Activated naive CD8-positive, alpha-beta T cell treated with anti-CD3 and anti-CD28 coated beads, Interleukin-2, amount 10 ng/mL, durations not matched to agents 7 days and 5 days (primary cell): ENCODE measurements at regions of chr4 and their contacts with region 1.

Region 1: DNA sequence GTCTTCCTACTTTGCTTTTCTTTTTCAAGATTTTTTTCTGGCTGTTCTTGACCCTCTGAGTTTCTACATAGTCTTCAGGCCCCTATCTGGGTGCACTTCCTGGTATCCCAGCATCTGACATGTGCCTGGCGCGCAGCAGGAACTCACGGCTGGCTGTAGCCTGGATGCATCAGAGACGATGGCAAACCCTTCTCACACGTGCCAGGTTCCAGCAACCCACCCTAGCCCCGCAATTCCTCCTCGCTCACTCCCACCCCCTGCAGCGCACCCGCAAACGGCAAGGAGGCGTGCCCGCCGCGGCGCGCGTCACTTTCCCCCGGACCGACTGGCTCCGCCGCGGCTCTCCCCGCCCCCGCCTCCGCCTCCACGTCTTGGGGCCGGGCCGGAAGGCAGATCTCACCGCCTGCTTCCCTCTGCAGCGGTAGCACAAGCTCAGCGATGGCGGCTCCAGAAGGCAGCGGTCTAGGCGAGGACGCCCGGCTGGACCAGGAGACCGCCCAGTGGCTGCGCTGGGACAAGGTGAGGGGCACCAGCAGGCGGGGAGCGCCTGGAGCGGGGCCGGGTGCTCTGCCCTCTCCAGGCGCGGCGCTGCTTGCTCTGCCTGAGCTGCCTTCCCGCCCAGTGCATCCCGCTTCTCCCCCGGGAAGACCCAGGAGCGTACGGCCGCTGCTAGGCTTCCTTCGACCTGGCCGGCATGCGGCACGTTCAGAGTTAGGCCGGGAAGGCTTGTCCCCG is at the start of gene PGM2:
- DNase-seq: peak; percentile 93
- ATAC-seq: peak; percentile 99
- H3K4me3 Mint-ChIP-seq: peak within 1 kb of the TSS; percentile 95
- H3K27ac Mint-ChIP-seq: peak within 1 kb of the TSS; percentile 91
- H3K4me1 Mint-ChIP-seq: peaks cover 39% of the 10 kb centered on the region
- H3K27me3 Mint-ChIP-seq: peaks cover 2% of the 10 kb centered on the region
- total RNA-seq, gene PGM2: 42.2 to 44.2 TPM

Region 2: GRCh38 chr4:37816006-37816405 is 10.5 kb before region 1 on chr4:
- POLR2A ChIA-PET with region 1: interaction called, 13 read pairs
- DNase-seq: no peak
- ATAC-seq: peak; percentile 80
- H3K4me3 Mint-ChIP-seq: peak overlapping the region; percentile 75
- H3K27ac Mint-ChIP-seq: peak overlapping the region; percentile 88
- H3K4me1 Mint-ChIP-seq: peaks cover 18% of the 10 kb centered on the region
- H3K27me3 Mint-ChIP-seq: peaks cover 5% of the 10 kb centered on the region

Region 3: GRCh38 chr4:37837446-37837845 is 11.0 kb after region 1 on chr4:
- POLR2A ChIA-PET with region 1: interaction called, 13 read pairs
- DNase-seq: no peak
- ATAC-seq: peak; percentile 57
- H3K4me3 Mint-ChIP-seq: peak overlapping the region; percentile 67
- H3K27ac Mint-ChIP-seq: peak overlapping the region; percentile 83
- H3K4me1 Mint-ChIP-seq: peaks cover 33% of the 10 kb centered on the region
- H3K27me3 Mint-ChIP-seq: no peaks in the 10 kb centered on the region

Region 4: DNA sequence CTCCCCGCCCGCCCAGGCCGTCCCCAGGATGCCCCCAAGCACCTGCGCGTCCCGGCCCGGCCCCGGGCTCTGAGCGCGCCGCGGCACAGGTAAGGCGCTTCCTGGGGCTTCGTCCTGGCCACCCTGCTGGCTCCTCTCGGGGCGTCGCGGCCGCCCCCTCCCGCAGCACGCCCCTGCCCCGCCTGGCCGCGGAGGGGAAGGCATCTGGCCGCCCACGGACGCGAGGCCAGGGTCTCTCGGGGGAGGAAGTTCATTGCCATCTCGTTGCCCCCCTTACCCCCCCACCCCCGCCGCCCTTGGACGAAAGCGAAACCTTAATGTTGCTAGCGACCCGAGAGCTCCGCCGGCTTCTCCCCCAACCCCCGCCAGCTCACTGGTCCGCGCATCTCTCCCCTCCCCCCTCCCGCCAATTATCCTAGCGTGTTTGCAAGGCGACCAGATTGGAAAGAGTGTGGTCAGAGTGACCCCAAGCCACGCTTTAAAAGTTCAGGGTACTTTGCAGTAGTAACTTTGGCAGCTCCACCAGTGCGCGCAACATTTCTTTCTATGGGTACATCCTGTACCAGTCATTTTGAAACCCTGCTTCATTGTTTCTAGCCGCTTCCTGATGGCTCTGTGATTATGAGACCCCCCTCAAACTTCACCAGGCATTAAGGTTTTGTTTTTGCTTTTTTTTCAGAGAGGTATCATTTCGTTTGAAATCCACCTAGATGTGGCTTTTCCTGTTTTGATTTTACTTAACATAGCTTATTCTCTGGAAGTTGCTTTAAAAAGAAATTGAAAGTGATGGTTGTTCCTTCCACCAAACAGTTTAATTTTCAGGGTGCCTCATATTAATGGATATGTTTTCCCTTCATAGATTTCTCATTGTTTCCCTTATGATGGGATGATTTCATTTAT is 65.0 kb after region 1 on chr4:
- POLR2A ChIA-PET with region 1: interaction called, 13 read pairs
- DNase-seq: peak; percentile 83
- ATAC-seq: peak; percentile 65
- H3K4me3 Mint-ChIP-seq: peak overlapping the region; percentile 91
- H3K27ac Mint-ChIP-seq: peak overlapping the region; percentile 93
- H3K4me1 Mint-ChIP-seq: peaks cover 36% of the 10 kb centered on the region
- H3K27me3 Mint-ChIP-seq: no peaks in the 10 kb centered on the region